Posterior vena cava (tissue), 2 donors: ENCODE measurements at regions of chr4 and their contacts with region 1.

Region 1: DNA sequence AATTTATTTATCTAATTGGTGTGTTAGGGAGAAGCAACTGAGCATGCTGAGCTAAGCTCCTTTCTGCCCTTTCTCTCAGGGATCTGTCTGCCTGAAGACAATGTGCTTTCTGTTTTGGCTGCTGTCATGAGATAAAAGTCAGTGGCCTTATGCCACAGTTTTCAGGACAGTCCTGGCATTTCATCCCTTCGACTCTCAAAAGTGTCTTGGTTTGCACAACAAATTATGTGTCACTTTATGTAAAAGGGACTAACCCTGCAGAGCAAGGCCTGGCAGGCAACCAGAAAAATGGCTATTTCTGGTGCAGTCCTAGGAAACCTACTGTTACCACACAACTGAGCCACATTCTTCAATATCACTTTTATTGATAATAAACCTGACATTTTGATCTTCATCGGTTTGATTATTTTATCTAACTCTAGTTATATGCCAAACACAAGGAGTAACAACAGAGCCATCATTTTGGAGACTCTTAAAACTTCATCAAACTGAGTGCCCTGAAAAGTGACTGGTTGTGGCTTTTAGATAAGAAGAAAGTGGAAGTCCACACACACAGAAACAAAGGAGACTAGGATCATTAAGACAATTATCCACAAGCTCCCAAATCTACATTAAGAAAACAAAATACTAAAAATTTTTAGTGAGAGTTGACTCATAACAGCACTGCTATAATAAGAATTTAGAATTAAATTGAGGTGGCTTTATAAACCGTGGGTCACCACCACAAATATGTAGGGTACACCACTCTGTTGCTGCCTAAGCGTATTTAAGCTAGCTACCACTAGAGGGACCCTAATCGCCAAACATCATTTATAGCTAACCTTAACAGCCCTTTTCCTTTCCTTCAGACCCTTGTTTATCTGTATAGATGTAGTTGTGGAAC is 95.9 kb upstream of the PTPN13 start:
- DNase-seq: no peak

Region 2: GRCh38 chr4:86530183-86530582 is 32.0 kb after region 1 on chr4:
- intact Hi-C with region 1: no loop called
- DNase-seq: no peak

Region 3: DNA sequence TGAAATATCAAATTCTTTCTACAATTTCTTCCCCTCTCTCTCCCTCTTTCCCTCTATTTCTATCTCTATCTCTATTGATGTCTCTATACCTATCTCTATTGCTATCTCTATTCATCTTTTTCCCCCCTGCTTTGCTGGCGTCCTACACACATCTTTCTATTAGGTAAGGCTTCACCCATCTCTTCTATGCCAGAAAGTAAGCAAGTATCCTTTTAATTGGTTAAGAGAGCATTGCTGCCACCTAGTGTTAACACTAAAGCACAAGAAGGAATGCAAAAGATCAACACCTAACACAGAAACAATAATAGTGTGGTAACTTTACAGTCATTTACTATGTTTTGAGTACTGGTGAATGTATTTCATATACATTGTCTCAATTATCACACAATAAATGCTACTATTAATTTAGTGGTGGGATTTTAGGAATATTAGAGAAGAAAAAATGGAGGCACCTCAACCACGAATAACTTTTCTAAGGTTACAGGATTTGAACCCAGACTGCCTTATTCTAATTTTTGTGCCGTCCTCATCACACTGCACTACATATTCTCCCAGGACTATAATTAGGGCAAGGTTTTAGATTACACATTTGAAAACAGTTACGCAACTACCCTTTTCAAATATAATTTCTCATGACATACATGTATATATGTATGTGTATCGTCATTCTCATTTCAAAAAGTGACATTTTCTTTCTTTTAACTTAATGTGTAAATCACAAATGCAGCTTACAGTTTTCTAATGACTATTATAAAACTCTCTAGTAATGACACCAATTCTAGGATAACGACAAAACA is 397.7 kb after region 1 on chr4:
- intact Hi-C with region 1: loop called (anchors 5 kb)
- DNase-seq: no peak